ENCODE measurements at regions of chr12 and their contacts with region 1.

Region 1: DNA sequence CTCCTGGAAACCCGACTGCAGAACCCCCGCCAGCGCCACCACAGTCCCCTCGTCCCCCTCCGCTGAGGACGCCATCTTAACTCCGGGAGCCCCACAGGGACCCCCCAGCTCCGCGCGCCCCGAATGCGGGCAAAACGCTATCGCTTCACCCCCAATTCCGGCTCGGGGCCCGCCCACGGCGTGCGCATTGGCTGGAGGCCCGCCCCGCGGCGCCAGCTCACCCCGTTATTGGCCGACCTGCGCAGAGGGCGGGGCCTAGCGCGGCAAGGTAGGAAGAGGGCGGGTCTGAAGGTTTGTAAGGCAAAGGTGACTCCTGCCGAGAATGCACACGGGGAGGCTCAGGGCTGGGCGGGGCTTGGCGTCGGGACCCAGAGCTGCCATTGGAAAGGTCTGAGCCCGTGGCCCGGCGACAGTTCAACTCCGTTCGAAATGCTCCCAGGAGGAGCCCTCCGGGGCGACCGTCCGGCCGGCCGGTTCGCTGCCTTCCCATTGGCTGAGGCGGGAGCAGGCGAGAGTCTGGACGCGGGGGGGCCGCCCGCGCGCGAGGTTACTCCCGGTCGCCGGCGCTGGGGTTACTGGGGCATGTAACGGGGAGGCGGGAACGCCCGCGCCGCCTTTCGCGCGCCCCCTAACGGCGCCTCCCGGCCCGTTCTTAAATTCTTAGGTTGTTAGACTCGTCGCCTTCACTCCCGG is at the start of gene LPCAT3:
- DNase-seq: peak; percentile 96 to 99 (median 98)
- H3K4me3 ChIP-seq: peak within 1 kb of the TSS; percentile 68 to 97 (median 89)
- H3K27ac ChIP-seq: peak within 1 kb of the TSS; percentile 63 to 98 (median 91)
- H3K27me3 ChIP-seq: no peaks in the 10 kb centered on the region
- CTCF ChIP-seq: peak; percentile 69 to 97 (median 88)
- total RNA-seq, gene LPCAT3: 10.6 to 35.2 (median 20.4) TPM

Region 2: DNA sequence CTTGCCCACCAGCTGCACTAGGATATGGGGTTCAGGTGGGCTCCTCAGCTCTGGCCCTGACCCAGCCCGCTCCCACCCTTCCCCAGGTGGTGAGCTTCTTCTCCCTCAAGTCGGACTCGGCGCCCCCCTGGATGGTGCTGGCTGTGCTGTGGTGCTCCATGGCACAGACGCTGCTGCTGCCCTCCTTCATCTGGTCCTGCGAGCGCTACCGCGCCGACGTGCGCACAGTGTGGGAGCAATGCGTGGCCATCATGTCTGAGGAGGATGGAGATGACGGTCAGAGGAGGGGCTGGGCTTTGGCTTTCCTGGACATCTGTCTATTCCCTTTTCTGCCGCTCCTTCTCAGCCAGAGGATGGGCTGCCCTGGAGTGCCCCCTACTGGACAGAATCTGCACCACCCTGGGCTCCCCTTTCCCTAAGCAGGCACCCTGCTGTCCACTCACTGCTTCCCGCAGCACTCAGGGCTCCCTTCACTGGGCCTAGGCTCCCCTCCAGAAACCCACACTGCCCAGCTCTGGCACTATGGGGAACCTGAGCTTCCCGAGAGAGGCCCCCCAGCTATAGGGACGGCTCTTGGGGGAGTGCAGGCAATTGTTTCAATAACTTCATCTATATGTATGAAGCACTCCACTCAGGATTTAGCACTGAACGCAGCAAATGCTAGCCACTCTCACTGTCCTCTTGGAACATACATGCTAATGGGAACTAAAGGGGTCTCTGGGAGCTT is 192.9 kb before region 1 on chr12:
- intact Hi-C with region 1: no loop called
- DNase-seq: peak; percentile 81 to 93 (median 90)
- H3K4me3 ChIP-seq: peak overlapping the region in 57 of 59 donors; percentile 3 to 81 (median 67)
- H3K27ac ChIP-seq: peak overlapping the region in 49 of 59 donors; percentile 7 to 98 (median 69)
- H3K27me3 ChIP-seq: peaks cover 0 to 6% (median 0%) of the 10 kb centered on the region in 45 donors
- CTCF ChIP-seq: peak; percentile 72 to 98 (median 91)

Region 3: DNA sequence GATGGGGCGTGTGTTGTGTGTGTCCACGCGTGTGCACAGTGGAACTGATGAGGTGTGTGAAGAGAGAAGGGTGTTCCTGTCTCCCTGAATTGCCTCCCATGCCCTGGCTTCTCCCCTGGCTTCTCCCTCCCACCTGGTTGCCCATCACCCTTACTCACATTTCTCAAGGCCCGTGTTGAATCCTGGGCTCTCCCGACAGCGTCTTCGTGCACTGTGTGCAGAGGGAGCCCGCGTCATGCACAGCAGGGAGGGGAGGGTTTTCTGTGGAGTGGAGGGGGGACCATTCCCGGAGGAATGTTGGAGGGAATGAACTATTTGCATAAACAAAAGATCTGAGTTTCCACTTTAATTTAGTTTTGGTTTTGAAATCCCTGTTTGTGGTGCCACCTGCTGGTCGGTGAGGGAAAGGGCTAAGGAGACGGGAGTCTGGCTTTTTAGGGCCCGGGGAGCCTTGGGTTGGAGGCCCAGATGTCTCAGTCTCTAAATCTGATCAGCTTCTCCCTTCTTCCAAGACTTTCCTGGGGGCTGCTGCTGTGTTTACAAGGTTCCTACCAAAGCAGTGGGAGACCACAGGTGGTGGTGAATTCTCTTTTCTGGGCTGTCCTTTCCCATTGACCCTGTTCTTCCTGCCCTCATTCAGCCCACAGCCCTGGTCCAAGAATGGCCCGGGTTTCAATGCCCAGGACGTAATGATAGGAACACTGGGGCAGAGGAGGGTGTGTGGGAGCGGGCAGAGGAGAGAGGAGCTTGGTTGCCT is 73.9 kb after region 1 on chr12 and contains the start of gene C1R:
- intact Hi-C with region 1: loop called in 1 of 2 experiments (anchors 5 kb)
- DNase-seq: peak in 9 of 10 donors; percentile 52 to 69 (median 60)
- H3K4me3 ChIP-seq: peak within 1 kb of the TSS; percentile 32 to 80 (median 60)
- H3K27ac ChIP-seq: peak within 1 kb of the TSS in 29 of 59 donors; percentile 0 to 79 (median 47)
- H3K27me3 ChIP-seq: peaks cover 0 to 2% (median 0%) of the 10 kb centered on the region in 45 donors
- CTCF ChIP-seq: peak; percentile 77 to 93 (median 87)
- total RNA-seq, gene C1R: 7.4 to 140 (median 26.2) TPM

Region 4: GRCh38 chr12:7155481-7156034 is 137.1 kb after region 1 on chr12:
- intact Hi-C with region 1: no loop called
- DNase-seq: peak in 1 of 10 donors; percentile 63
- H3K4me3 ChIP-seq: peak overlapping the region in 1 of 59 donors; percentile 12
- H3K27ac ChIP-seq: peak overlapping the region in 38 of 59 donors; percentile 18 to 81 (median 59)
- H3K27me3 ChIP-seq: no peaks in the 10 kb centered on the region
- CTCF ChIP-seq: no peak